ENCODE measurements at regions of chr15 and their contacts with region 1.

Region 1: DNA sequence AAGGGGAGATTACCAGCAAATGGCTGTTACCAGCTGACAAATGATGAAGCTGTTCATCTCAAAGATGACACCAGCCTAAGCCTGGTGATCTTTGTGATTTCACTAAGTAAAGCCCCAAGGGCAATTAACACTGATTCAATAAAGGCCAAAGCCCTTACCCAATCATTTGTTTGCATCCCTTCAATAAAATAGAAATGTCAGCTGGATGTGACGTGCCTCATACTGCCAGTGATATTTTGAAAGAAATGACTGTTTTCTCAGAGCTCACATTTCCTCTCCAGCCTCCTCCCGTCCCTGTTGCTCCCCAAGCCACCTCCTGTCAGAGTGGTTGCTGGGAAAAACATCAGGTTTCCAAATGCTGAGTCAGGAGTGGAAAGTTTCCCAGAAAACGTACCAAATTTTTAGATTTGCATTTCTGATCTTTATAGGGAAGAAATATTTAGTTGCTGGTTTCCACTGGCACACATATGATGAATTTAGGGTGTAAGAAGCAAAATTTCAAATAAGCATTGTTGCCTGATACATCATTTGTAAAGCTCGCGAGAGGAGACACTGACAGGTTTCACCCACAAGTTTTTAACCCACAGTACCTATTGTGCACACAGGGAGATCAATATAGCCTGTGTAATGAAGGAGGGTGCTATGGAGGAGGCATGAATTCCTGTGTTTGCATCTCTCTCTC is 21.0 kb downstream of the C2CD4A start:
- DNase-seq: no peak
- H3K4me3 ChIP-seq: no peak overlapping the region
- H3K27ac ChIP-seq: no peak overlapping the region
- H3K27me3 ChIP-seq: no peaks in the 10 kb centered on the region
- CTCF ChIP-seq: no peak

Region 2: GRCh38 chr15:61798631-61799030 is 289.2 kb before region 1 on chr15:
- CTCF ChIA-PET with region 1: no interaction called
- POLR2A ChIA-PET with region 1: no interaction called
- DNase-seq: no peak
- H3K4me3 ChIP-seq: no peak overlapping the region
- H3K27ac ChIP-seq: no peak overlapping the region
- H3K27me3 ChIP-seq: no peaks in the 10 kb centered on the region
- CTCF ChIP-seq: no peak

Region 3: GRCh38 chr15:62052713-62053112 is 35.1 kb before region 1 on chr15:
- CTCF ChIA-PET with region 1: no interaction called
- POLR2A ChIA-PET with region 1: interaction called, 10 read pairs
- DNase-seq: no peak
- H3K4me3 ChIP-seq: no peak overlapping the region
- H3K27ac ChIP-seq: no peak overlapping the region
- H3K27me3 ChIP-seq: no peaks in the 10 kb centered on the region
- CTCF ChIP-seq: no peak